ENCODE measurements at regions of chr14 and their contacts with region 1.

Region 1: DNA sequence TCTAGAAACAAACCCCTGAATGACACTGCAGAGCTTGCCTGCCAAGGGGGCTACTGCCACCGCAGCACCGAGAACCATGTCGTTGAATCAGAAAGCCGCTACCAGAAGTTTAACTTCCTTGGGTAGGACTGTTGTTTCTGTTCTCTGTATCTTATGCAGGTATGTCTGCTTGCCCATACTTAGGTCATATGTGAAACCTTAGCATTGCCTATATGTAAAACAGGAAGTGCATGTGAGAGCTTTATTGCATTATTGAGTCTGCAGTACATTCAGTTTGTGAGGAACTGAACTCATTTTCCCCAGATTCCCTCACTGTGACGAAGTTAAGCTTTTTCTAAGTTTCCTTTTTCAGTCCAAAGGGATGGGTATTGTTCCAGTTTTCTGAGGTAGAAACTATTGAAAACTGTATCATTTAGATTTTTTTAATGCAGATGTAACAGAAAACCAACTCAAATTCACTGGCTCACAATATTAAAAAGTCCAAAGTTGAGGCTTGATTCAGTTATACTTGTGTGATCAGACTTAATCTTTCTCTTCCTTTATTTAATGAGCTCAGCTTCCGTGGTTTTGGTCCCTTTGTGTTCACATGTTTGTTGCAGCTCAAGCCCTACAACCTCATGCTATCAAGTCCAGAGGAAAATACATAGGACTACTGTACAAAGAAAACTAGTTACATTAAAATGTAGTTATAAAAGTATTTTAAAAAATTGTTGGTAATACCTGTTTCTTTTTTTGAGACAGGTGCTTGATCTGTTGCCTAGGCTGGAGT is 6.9 kb downstream of the FBXO34 start:
- DNase-seq: peak in 2 of 35 experiments; percentile 0 to 20
- ATAC-seq: peak; percentile 48 to 76 (median 68)
- H3K4me3 ChIP-seq: no peak overlapping the region
- H3K4me3 Mint-ChIP-seq: peak overlapping the region; percentile 56 to 65 (median 65)
- H3K27ac ChIP-seq: peak overlapping the region; percentile 24
- H3K27ac Mint-ChIP-seq: peak overlapping the region; percentile 82 to 86
- H3K4me1 ChIP-seq: peaks cover 10 to 14% of the 10 kb centered on the region in 2 experiments
- H3K4me1 Mint-ChIP-seq: peaks cover 76 to 77% (median 77%) of the 10 kb centered on the region in 3 donors
- H3K27me3 ChIP-seq: no peaks in the 10 kb centered on the region
- H3K27me3 Mint-ChIP-seq: no peaks in the 10 kb centered on the region

Region 2: DNA sequence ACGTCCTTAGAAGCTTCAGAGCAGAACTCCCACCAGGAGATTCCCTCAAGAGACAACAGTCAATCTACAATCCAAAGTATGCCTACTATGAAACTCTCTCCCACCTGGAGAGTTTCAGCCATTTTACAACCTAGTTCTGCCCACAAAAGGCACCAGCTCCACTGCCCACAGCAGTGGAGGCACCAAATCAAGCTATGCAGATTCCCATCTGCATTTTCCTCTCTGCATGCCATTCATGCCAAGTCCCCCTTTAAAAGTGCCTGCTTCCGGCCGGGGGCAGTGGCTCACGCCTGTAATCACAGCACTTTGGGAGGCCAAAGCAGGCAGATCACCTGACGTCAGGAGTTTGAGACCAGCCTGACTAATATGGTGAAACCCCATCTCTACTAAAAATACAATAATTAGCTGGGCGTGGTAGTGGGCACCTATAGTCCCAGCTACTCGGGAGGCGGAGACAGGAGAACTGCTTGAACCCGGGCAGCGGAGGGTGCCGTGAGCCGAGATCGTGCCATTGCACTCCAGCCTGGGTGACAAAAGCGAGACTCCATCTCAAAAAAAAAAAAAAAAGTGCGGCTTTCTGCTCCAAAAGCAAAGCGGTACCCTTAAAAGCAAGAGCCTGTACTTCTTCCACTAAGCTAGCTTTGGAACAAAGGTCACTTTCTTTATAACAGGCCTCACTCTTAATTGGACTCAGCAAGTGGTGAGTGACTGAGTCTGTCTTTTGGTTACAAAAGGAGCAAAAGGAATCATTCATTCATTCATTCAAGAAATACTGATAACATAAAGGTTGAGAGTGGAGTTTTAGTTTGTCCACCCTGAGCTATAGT is 76.7 kb before region 1 on chr14:
- CTCF ChIA-PET with region 1: interaction called in 1 of 2 experiments, 10 read pairs
- POLR2A ChIA-PET with region 1: no interaction called
- DNase-seq: no peak
- ATAC-seq: no peak
- H3K4me3 ChIP-seq: no peak overlapping the region
- H3K4me3 Mint-ChIP-seq: no peak overlapping the region
- H3K27ac ChIP-seq: no peak overlapping the region
- H3K27ac Mint-ChIP-seq: no peak overlapping the region
- H3K4me1 ChIP-seq: no peaks in the 10 kb centered on the region
- H3K4me1 Mint-ChIP-seq: no peaks in the 10 kb centered on the region
- H3K27me3 ChIP-seq: peaks cover 0 to 10% of the 10 kb centered on the region in 2 experiments
- H3K27me3 Mint-ChIP-seq: peaks cover 0 to 6% of the 10 kb centered on the region in 2 donors